B cell (primary cell): ENCODE measurements at regions of chr10 and their contacts with region 1.

Region 1: DNA sequence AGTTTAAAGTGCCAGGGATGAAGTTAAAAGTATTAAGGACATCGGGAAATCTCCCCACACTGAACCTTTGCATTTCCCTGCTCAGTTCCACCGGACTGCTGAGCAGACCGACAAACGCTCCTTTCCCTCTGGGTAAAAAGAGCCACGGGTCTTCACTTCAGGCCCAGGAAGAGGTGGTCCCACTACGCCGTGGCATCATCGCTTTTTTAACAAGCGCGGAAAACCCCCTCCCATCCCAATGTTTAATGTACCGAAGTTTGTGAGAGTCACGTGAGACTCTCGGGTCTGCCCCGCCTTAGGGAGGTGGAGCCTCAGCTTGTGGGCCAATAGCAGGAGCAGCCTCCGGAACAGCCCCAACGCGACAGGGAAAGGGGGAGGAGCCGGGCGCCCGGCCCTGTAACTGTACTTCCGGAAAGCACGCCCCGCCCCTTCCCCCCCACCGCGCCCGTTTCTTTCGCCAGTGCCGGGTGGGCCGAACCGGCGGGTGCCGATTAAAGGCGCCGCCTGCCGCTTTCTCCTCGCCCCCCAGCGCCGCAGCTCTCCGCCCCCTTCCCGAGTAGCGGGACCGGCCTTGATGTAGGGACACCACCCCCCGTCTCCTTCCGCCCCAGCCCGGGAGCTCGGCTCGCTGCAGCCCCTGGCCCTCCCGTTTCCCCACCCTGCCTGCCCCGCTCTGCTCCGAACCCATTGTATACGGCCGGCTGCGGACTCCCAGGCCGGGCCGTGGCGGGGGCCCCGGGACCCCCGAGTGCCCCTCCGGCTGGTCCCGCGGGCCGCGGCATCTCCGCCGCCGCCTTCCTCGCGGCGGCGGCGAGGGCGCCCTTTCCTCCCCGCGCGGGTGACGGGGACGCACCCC is 2.2 kb upstream of the TRIM8 start:
- DNase-seq: peak; percentile 98
- ATAC-seq: peak; percentile 64
- H3K4me3 ChIP-seq: peak overlapping the region; percentile 74 to 89 (median 77)
- H3K4me3 Mint-ChIP-seq: peak overlapping the region; percentile 93
- H3K27ac ChIP-seq: peak overlapping the region; percentile 93 to 97
- H3K27ac Mint-ChIP-seq: peak overlapping the region; percentile 95
- H3K4me1 ChIP-seq: peaks cover 11 to 21% of the 10 kb centered on the region in 2 donors
- H3K4me1 Mint-ChIP-seq: peaks cover 23% of the 10 kb centered on the region
- H3K27me3 ChIP-seq: no peaks in the 10 kb centered on the region
- H3K27me3 Mint-ChIP-seq: no peaks in the 10 kb centered on the region
- CTCF ChIP-seq: no peak

Region 2: GRCh38 chr10:101830322-101831168 is 811.6 kb before region 1 on chr10:
- CTCF ChIA-PET with region 1: no interaction called
- POLR2A ChIA-PET with region 1: interaction called, 3 read pairs
- intact Hi-C with region 1: loop called (anchors 5 kb)
- DNase-seq: peak; percentile 99
- ATAC-seq: peak; percentile 73
- H3K4me3 ChIP-seq: peak overlapping the region; percentile 3 to 72 (median 58)
- H3K4me3 Mint-ChIP-seq: peak overlapping the region; percentile 94
- H3K27ac ChIP-seq: peak overlapping the region; percentile 89 to 96
- H3K27ac Mint-ChIP-seq: peak overlapping the region; percentile 99
- H3K4me1 ChIP-seq: peaks cover 35 to 58% of the 10 kb centered on the region in 2 donors
- H3K4me1 Mint-ChIP-seq: peaks cover 45% of the 10 kb centered on the region
- H3K27me3 ChIP-seq: no peaks in the 10 kb centered on the region
- H3K27me3 Mint-ChIP-seq: no peaks in the 10 kb centered on the region
- CTCF ChIP-seq: no peak

Region 3: GRCh38 chr10:102120142-102120990 is 521.7 kb before region 1 on chr10 and contains the start of gene LDB1:
- CTCF ChIA-PET with region 1: no interaction called
- POLR2A ChIA-PET with region 1: interaction called, 15 read pairs
- intact Hi-C with region 1: loop called (anchors 2 kb)
- DNase-seq: peak; percentile 89
- ATAC-seq: peak; percentile 61
- H3K4me3 ChIP-seq: peak within 1 kb of the TSS; percentile 71 to 95 (median 90)
- H3K4me3 Mint-ChIP-seq: peak within 1 kb of the TSS; percentile 97
- H3K27ac ChIP-seq: peak within 1 kb of the TSS; percentile 87 to 94
- H3K27ac Mint-ChIP-seq: peak within 1 kb of the TSS; percentile 99
- H3K4me1 ChIP-seq: peaks cover 45 to 55% of the 10 kb centered on the region in 2 donors
- H3K4me1 Mint-ChIP-seq: peaks cover 55% of the 10 kb centered on the region
- H3K27me3 ChIP-seq: no peaks in the 10 kb centered on the region
- H3K27me3 Mint-ChIP-seq: no peaks in the 10 kb centered on the region
- CTCF ChIP-seq: no peak
- total RNA-seq, gene LDB1: 111 and 114 TPM in 2 replicates

Region 4: DNA sequence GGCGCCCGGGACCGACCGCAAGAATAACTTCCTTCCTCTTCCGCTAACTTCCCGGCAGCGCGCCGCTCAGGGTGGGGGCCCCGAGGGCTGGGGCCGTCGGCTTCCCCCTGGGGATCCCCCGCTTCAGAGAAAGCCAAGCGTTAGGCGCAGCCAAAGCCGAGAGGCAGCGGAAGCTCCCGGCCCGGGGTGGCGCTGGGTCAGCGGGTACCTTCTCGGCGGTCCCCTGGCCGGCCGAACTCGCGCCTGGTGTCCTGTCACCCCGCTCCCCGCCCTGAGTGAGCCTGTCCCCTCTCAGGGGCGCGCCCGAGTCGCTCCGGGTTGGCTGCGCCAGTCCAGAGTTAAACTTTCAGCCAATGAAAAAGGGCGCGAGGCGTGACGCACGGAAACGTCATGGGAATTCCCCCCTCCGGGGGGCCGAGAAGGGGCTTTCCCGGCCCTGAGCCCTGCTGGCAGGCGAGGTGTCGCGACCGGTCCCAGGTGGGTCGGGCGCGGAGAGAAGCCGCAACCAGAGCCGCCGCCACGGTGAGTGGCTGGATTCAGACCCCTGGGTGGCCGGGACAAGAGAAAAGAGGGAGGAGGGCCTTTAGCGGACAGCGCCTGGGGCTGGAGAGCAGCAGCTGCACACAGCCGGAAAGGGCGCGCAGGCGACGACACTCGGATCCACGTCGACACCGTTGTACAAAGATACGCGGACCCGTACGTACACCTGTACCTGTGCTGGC is 247.9 kb before region 1 on chr10:
- CTCF ChIA-PET with region 1: interaction called, 3 read pairs
- POLR2A ChIA-PET with region 1: interaction called, 16 read pairs
- intact Hi-C with region 1: loop called (anchors 1 kb)
- DNase-seq: peak; percentile 100
- ATAC-seq: peak; percentile 76
- H3K4me3 ChIP-seq: peak overlapping the region; percentile 86 to 100 (median 99)
- H3K4me3 Mint-ChIP-seq: peak overlapping the region; percentile 95
- H3K27ac ChIP-seq: peak overlapping the region; percentile 98 to 100
- H3K27ac Mint-ChIP-seq: peak overlapping the region; percentile 99
- H3K4me1 ChIP-seq: peaks cover 35 to 44% of the 10 kb centered on the region in 2 donors
- H3K4me1 Mint-ChIP-seq: peaks cover 41% of the 10 kb centered on the region
- H3K27me3 ChIP-seq: no peaks in the 10 kb centered on the region
- H3K27me3 Mint-ChIP-seq: no peaks in the 10 kb centered on the region
- CTCF ChIP-seq: peak; percentile 38

Region 5: GRCh38 chr10:102660888-102661657 is 19.0 kb after region 1 on chr10:
- CTCF ChIA-PET with region 1: interaction called, 12 read pairs
- POLR2A ChIA-PET with region 1: interaction called, 31 read pairs
- intact Hi-C with region 1: loop called (anchors 2 kb)
- DNase-seq: peak; percentile 43
- ATAC-seq: peak; percentile 66
- H3K4me3 ChIP-seq: peak overlapping the region in 2 of 5 experiments; percentile 8 to 12
- H3K4me3 Mint-ChIP-seq: peak overlapping the region; percentile 49
- H3K27ac ChIP-seq: peak overlapping the region in 1 of 2 donors; percentile 23
- H3K27ac Mint-ChIP-seq: peak overlapping the region; percentile 56
- H3K4me1 ChIP-seq: peaks cover 12 to 15% of the 10 kb centered on the region in 2 donors
- H3K4me1 Mint-ChIP-seq: peaks cover 16% of the 10 kb centered on the region
- H3K27me3 ChIP-seq: no peaks in the 10 kb centered on the region
- H3K27me3 Mint-ChIP-seq: no peaks in the 10 kb centered on the region
- CTCF ChIP-seq: no peak

Region 6: GRCh38 chr10:102743588-102744373 is 101.7 kb after region 1 on chr10 and contains the start of gene WBP1L:
- CTCF ChIA-PET with region 1: no interaction called
- POLR2A ChIA-PET with region 1: interaction called, 13 read pairs
- intact Hi-C with region 1: no loop called
- DNase-seq: peak; percentile 98
- ATAC-seq: peak; percentile 95
- H3K4me3 ChIP-seq: peak within 1 kb of the TSS; percentile 70 to 96 (median 89)
- H3K4me3 Mint-ChIP-seq: peak within 1 kb of the TSS; percentile 89
- H3K27ac ChIP-seq: peak within 1 kb of the TSS; percentile 58 to 86
- H3K27ac Mint-ChIP-seq: peak within 1 kb of the TSS; percentile 88
- H3K4me1 ChIP-seq: peaks cover 24 to 25% of the 10 kb centered on the region in 2 donors
- H3K4me1 Mint-ChIP-seq: peaks cover 42% of the 10 kb centered on the region
- H3K27me3 ChIP-seq: peaks cover 0 to 2% (median 0%) of the 10 kb centered on the region in 4 experiments
- H3K27me3 Mint-ChIP-seq: no peaks in the 10 kb centered on the region
- CTCF ChIP-seq: peak; percentile 16
- total RNA-seq, gene WBP1L: 43.2 and 44.3 TPM in 2 replicates

Region 7: DNA sequence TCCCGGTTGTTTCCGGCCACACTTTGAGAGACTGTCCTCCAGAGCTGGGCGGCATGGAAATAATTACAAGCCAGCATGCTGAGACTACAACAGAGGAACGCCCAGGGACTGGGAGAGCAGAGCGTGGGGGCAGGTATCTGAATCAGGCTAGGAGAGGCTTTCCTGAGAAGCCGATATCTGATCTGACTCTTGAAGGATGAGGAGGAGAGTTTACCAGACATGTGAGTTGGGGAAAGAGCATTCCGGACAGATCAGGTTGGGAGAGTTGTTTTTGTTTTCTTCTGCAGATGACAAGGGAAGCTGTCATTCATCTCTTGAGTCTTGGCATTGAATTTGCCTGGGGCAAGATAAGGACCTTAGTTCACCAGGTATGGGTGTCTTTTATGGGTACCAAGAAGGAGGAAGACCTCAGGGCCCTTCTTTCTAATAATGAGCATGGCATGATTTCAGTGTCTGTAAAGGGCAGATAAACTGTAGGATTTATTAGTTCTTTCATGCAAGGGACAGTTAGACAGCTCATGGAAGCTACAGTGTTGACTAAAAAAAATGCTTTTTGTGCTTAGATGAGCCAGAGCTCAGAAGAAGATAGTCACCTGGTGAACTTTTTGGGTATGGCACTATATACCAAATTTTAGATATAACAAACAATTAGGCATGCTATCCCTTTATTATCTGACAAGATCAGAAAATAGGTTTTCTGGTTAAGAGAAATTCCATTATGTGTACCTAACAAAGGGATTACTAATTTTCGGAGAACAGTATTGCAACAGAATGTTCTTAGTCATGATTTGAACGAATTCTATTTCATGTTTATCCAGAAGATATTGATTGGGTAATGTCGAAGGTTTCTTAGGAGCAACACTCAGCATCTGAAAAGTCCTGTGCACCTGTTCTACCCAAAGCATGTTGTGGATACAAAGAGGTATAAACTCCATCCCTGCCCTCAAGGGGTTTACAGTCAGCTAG is 137.9 kb after region 1 on chr10:
- CTCF ChIA-PET with region 1: no interaction called
- POLR2A ChIA-PET with region 1: no interaction called
- intact Hi-C with region 1: no loop called
- DNase-seq: no peak
- ATAC-seq: no peak
- H3K4me3 ChIP-seq: no peak overlapping the region
- H3K4me3 Mint-ChIP-seq: no peak overlapping the region
- H3K27ac ChIP-seq: no peak overlapping the region
- H3K27ac Mint-ChIP-seq: no peak overlapping the region
- H3K4me1 ChIP-seq: peaks cover 0 to 10% of the 10 kb centered on the region in 2 donors
- H3K4me1 Mint-ChIP-seq: peaks cover 46% of the 10 kb centered on the region
- H3K27me3 ChIP-seq: no peaks in the 10 kb centered on the region
- H3K27me3 Mint-ChIP-seq: no peaks in the 10 kb centered on the region
- CTCF ChIP-seq: no peak